B cell (primary cell): ENCODE measurements at regions of chr7 and their contacts with region 1.

Region 1: GRCh38 chr7:87506246-87507180 is 31.0 kb upstream of the ABCB4 start:
- DNase-seq: peak; percentile 10
- ATAC-seq: peak; percentile 17
- H3K4me3 ChIP-seq: no peak overlapping the region
- H3K4me3 Mint-ChIP-seq: no peak overlapping the region
- H3K27ac ChIP-seq: peak overlapping the region in 1 of 2 donors; percentile 16
- H3K27ac Mint-ChIP-seq: peak overlapping the region; percentile 8
- H3K4me1 ChIP-seq: peaks cover 18 to 19% of the 10 kb centered on the region in 2 donors
- H3K4me1 Mint-ChIP-seq: peaks cover 29% of the 10 kb centered on the region
- H3K27me3 ChIP-seq: no peaks in the 10 kb centered on the region
- H3K27me3 Mint-ChIP-seq: no peaks in the 10 kb centered on the region
- CTCF ChIP-seq: peak; percentile 53

Region 2: GRCh38 chr7:87517136-87517815 is 10.8 kb after region 1 on chr7:
- CTCF ChIA-PET with region 1: interaction called, 12 read pairs
- POLR2A ChIA-PET with region 1: no interaction called
- intact Hi-C with region 1: no loop called
- DNase-seq: no peak
- ATAC-seq: no peak
- H3K4me3 ChIP-seq: no peak overlapping the region
- H3K4me3 Mint-ChIP-seq: no peak overlapping the region
- H3K27ac ChIP-seq: no peak overlapping the region
- H3K27ac Mint-ChIP-seq: no peak overlapping the region
- H3K4me1 ChIP-seq: no peaks in the 10 kb centered on the region
- H3K4me1 Mint-ChIP-seq: no peaks in the 10 kb centered on the region
- H3K27me3 ChIP-seq: no peaks in the 10 kb centered on the region
- H3K27me3 Mint-ChIP-seq: no peaks in the 10 kb centered on the region
- CTCF ChIP-seq: no peak